Tibial artery (tissue), 4 donors: ENCODE measurements at regions of chr11 and their contacts with region 1.

Region 1: GRCh38 chr11:102346748-102347461 is at the start of gene BIRC2:
- DNase-seq: peak; percentile 93 to 96
- H3K4me3 ChIP-seq: peak within 1 kb of the TSS; percentile 87 to 89
- H3K27ac ChIP-seq: peak within 1 kb of the TSS; percentile 98 to 99
- H3K4me1 ChIP-seq: peaks cover 0 to 37% (median 12%) of the 10 kb centered on the region in 4 donors
- H3K27me3 ChIP-seq: no peaks in the 10 kb centered on the region
- CTCF ChIP-seq: peak; percentile 74 to 79

Region 2: DNA sequence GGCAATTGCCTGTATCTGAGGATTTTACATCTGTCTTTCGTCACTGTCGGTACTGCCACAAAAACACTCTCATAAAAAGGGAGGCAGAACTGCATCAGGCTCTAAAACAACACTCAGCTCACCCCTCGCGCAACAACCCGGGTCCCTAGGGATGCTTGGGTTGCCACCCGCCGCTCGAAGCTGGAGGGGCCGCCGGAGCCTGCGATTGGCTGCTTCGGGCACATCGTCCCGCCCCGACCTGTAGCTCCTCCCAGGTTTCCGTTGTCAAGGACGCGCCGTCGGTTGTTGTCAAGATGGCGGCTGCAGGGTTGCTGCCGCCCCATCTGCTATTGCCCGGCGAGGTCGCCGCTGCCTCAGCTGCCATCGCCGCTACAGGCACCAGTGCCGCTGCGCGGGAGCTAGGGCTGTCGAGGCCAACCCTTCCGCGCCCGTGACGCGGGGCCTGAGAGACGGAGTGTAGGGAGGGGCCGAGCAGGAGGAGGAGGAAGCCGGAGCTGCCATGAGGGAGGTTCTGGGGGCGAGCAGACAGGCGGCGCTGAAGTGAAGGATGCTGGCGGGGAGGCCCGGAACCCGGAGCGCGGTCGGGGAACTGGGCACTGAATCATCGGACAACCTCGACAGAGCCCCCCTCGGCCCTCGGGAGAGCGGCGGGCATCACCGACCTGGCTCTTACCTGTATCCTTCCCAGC is 432.0 kb before region 1 on chr11 and contains the start of gene CEP126:
- intact Hi-C with region 1: loop called (anchors 10 kb)
- DNase-seq: peak; percentile 96 to 98
- H3K4me3 ChIP-seq: peak within 1 kb of the TSS; percentile 56 to 69
- H3K27ac ChIP-seq: peak within 1 kb of the TSS; percentile 94
- H3K4me1 ChIP-seq: peaks cover 0 to 52% (median 8%) of the 10 kb centered on the region in 4 donors
- H3K27me3 ChIP-seq: no peaks in the 10 kb centered on the region
- CTCF ChIP-seq: peak in 1 of 2 experiments; percentile 36

Region 3: DNA sequence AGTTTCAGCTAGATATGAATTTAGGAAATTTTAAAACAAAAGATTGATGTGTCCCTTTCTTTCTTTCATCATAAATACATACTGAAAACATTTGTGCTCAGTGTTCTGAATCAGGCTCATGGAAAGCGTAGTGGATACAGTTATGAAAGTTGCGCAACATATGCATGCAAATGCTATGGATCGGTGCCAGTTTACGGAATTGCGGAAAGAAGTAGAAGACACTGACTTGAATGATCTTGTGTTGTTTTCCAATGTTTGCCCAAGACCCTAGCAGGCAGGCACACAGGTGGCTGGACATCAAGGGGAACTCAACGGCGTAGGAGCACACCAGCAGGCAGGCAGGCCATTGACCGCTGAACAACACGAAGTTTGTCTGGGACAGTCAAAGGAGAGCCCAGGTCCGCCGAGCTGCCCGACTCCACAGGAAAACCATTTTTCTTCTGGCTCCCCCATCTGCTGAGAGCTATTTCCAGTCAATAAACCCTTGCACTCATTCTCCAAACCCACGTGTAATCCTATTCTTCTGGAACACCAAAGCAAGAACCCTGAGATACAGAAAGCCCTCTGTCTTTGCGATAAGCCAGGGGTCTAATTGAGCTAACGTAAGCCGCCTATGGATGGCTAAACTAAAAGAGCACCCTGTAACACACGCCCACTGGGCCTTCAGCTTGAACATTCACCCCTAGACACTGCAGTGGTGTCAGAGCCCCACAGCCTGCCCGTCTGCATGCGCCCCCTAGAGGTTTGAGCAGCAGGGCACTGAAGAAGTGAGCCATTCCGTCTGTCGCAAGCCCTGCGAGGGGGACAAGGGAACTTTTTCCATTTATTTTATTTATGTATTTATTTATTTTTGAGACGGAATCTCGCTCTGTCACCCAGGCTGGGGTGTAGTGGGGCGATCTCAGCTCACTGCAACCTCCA is 37.0 kb before region 1 on chr11:
- intact Hi-C with region 1: no loop called
- DNase-seq: no peak
- H3K4me3 ChIP-seq: no peak overlapping the region
- H3K27ac ChIP-seq: no peak overlapping the region
- H3K4me1 ChIP-seq: peaks cover 0 to 15% (median 4%) of the 10 kb centered on the region in 4 donors
- H3K27me3 ChIP-seq: no peaks in the 10 kb centered on the region
- CTCF ChIP-seq: no peak

Region 4: DNA sequence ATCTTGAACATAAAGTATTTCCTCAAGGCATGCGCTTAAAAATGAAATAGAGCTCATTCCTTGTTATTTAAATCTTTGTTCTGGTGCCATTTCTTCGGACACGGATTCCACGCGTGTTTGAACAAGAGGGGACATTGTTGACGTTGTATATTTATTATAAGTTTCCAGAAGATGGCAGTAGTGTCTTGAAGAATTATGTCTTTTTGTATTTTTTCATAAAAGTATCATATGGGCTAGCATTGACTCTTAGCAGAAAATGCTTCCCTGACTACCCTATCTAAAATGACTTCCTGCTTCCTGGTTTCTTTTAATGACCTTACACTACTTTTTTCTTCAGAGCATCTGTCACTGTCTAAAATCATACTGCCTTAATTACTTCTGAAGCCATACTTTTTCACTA is 20.5 kb after region 1 on chr11:
- intact Hi-C with region 1: no loop called
- DNase-seq: no peak
- H3K4me3 ChIP-seq: no peak overlapping the region
- H3K27ac ChIP-seq: no peak overlapping the region
- H3K4me1 ChIP-seq: peaks cover 0 to 9% (median 4%) of the 10 kb centered on the region in 4 donors
- H3K27me3 ChIP-seq: no peaks in the 10 kb centered on the region
- CTCF ChIP-seq: no peak

Region 5: DNA sequence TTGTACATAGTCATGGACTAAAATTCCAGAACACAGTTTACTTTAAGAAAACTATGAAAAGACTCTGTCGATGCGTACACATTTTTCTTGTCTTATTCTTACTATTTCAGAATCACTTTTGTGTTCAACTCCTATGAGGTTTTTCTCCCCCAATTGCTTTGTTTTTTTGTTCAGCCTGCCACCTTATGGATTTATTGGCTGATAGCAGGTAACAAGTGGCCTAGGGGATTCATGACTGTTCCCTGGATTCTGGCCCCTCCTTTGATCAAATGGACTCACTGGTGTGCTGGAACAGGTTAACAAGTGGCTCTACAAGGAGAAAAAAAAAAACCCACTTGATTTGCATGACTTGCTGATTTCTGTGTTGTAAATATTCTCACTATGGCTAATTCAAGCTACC is 267.6 kb after region 1 on chr11:
- intact Hi-C with region 1: loop called (anchors 5 kb)
- DNase-seq: no peak
- H3K4me3 ChIP-seq: no peak overlapping the region
- H3K27ac ChIP-seq: no peak overlapping the region
- H3K4me1 ChIP-seq: no peaks in the 10 kb centered on the region
- H3K27me3 ChIP-seq: no peaks in the 10 kb centered on the region
- CTCF ChIP-seq: no peak